T-cell (primary cell): ENCODE measurements at regions of chr2 and their contacts with region 1.

Region 1: DNA sequence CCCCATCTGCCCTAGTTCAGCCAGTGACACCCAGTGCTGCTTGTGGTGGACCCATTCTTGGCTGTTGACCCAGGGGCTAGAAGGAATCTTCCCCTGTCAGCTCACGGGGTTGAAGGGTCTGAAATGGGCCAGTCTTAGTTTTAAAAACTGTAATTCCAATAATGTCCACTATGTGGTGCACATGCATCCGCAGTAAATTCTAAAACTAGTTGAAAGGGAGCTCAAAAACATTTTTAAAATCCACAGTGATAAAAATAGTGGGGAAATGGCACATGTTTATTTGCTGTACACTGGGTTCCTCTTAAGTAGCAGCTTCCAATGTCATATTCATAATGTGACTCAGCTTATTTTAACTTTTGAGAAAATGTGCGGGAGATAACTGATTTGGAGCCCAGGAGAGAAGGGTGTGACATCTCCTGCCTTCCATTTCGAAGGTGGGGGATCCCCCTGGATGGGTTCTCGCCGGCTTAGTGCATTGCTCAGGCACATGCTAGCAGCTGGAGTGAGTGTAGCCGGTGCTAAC is 32.8 kb downstream of the GRHL1 start:
- DNase-seq: peak in 4 of 35 experiments; percentile 11 to 82 (median 28)
- ATAC-seq: peak; percentile 64 to 78 (median 72)
- H3K4me3 ChIP-seq: no peak overlapping the region
- H3K4me3 Mint-ChIP-seq: no peak overlapping the region
- H3K27ac ChIP-seq: no peak overlapping the region
- H3K27ac Mint-ChIP-seq: no peak overlapping the region
- H3K4me1 ChIP-seq: peaks cover 0 to 3% of the 10 kb centered on the region in 2 experiments
- H3K4me1 Mint-ChIP-seq: peaks cover 13 to 18% (median 14%) of the 10 kb centered on the region in 3 donors
- H3K27me3 ChIP-seq: peaks cover 0 to 17% of the 10 kb centered on the region in 2 experiments
- H3K27me3 Mint-ChIP-seq: peaks cover 0 to 2% of the 10 kb centered on the region in 2 donors

Region 2: DNA sequence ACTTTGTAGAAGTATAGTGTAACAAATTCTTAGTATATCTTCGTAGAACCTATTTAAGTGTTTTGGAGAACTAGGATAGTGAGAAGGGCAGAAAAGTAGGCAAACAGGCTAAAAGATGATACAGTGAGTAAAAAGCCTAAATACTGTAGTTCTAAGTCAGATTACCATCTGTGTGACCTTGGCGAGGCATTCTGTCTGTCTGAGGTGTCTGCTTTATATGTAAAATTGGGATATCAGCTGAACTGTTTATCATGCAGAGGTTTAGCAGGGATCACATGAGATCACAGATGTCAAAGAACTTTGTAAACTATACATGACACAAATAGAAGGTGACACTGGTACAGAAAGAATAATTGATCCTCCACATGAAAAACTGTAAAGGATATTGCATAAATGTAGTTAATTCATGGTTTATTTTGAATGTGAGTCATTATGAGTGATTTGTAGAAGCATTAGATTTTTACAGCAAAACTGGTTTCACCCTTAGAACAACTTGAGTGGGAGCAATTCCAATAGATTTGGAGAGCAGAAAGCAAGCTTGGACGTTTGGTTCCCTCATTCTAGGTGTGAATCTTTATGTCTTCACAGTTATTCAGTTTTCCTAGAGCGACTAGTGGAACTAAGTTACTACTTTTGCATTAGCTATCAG is 99.1 kb before region 1 on chr2:
- CTCF ChIA-PET with region 1: interaction called in 1 of 2 experiments, 3 read pairs
- POLR2A ChIA-PET with region 1: interaction called in 1 of 2 experiments, 17 read pairs
- DNase-seq: no peak
- ATAC-seq: no peak
- H3K4me3 ChIP-seq: no peak overlapping the region
- H3K4me3 Mint-ChIP-seq: no peak overlapping the region
- H3K27ac ChIP-seq: no peak overlapping the region
- H3K27ac Mint-ChIP-seq: peak overlapping the region in 1 of 2 donors; percentile 2
- H3K4me1 ChIP-seq: no peaks in the 10 kb centered on the region
- H3K4me1 Mint-ChIP-seq: peaks cover 6 to 21% (median 14%) of the 10 kb centered on the region in 3 donors
- H3K27me3 ChIP-seq: no peaks in the 10 kb centered on the region
- H3K27me3 Mint-ChIP-seq: no peaks in the 10 kb centered on the region

Region 3: GRCh38 chr2:10028988-10029874 is 45.0 kb after region 1 on chr2:
- CTCF ChIA-PET with region 1: interaction called, 8 to 27 read pairs
- POLR2A ChIA-PET with region 1: interaction called in 1 of 2 experiments, 3 read pairs
- DNase-seq: peak in 29 of 35 experiments; percentile 16 to 68 (median 52)
- ATAC-seq: peak; percentile 89 to 94 (median 92)
- H3K4me3 ChIP-seq: peak overlapping the region; percentile 15 to 50
- H3K4me3 Mint-ChIP-seq: peak overlapping the region; percentile 39 to 73 (median 54)
- H3K27ac ChIP-seq: peak overlapping the region; percentile 45
- H3K27ac Mint-ChIP-seq: peak overlapping the region; percentile 50 to 69
- H3K4me1 ChIP-seq: peaks cover 16 to 33% of the 10 kb centered on the region in 2 experiments
- H3K4me1 Mint-ChIP-seq: peaks cover 25 to 32% (median 29%) of the 10 kb centered on the region in 3 donors
- H3K27me3 ChIP-seq: peaks cover 0 to 5% of the 10 kb centered on the region in 2 experiments
- H3K27me3 Mint-ChIP-seq: no peaks in the 10 kb centered on the region

Region 4: GRCh38 chr2:10043906-10044601 is 59.8 kb after region 1 on chr2:
- CTCF ChIA-PET with region 1: interaction called, 41 to 86 read pairs
- POLR2A ChIA-PET with region 1: interaction called in 1 of 2 experiments, 4 read pairs
- DNase-seq: peak; percentile 78 to 94 (median 87)
- ATAC-seq: peak; percentile 67 to 75 (median 70)
- H3K4me3 ChIP-seq: peak overlapping the region; percentile 42 to 49
- H3K4me3 Mint-ChIP-seq: peak overlapping the region; percentile 68 to 83 (median 76)
- H3K27ac ChIP-seq: peak overlapping the region; percentile 73
- H3K27ac Mint-ChIP-seq: peak overlapping the region; percentile 44 to 68
- H3K4me1 ChIP-seq: peaks cover 0 to 36% of the 10 kb centered on the region in 2 experiments
- H3K4me1 Mint-ChIP-seq: peaks cover 18 to 37% (median 27%) of the 10 kb centered on the region in 3 donors
- H3K27me3 ChIP-seq: peaks cover 0 to 9% of the 10 kb centered on the region in 2 experiments
- H3K27me3 Mint-ChIP-seq: no peaks in the 10 kb centered on the region